Naive thymus-derived CD4-positive, alpha-beta T cell (primary cell): ENCODE measurements at regions of chr17 and their contacts with region 1.

Region 1: DNA sequence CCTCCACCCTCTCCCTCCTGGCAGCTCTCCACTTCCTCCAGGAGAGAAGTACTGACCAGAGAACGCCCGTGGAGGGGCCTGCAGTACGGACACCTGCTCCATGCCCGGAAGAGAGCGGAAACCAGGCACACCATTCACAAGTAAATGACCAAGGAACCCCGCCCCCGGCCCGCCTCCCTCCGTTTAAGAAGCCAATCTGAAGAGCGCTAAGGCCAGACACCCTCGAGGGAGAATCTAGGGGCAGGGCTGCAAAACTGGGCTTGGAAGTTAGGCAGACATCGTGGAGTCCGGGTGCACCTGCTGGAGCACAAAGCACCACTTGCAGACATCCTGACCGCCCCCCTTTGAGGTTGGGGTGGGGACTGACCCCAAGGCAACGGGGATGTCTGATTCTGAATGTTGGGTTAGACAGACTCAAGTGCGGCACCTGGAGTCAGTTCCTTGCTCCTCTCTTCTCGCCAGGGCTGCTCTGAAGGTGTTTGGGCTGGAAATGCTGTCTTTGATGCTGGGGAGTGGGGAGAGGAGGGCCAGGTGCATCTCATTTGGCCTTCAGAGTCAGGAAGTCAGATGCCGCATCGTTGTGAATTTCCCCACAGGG is 964 bp upstream of the FAAP100 start:
- DNase-seq: peak; percentile 34 to 83 (median 75)
- ATAC-seq: peak; percentile 77
- H3K4me3 ChIP-seq: peak overlapping the region; percentile 77
- H3K4me3 Mint-ChIP-seq: peak overlapping the region; percentile 88 to 93 (median 90)
- H3K27ac ChIP-seq: peak overlapping the region; percentile 95
- H3K27ac Mint-ChIP-seq: peak overlapping the region; percentile 69 to 95 (median 92)
- H3K4me1 ChIP-seq: peaks cover 17% of the 10 kb centered on the region in 2 donors
- H3K4me1 Mint-ChIP-seq: peaks cover 16 to 41% (median 36%) of the 10 kb centered on the region in 7 donors
- H3K27me3 ChIP-seq: no peaks in the 10 kb centered on the region
- H3K27me3 Mint-ChIP-seq: no peaks in the 10 kb centered on the region

Region 2: DNA sequence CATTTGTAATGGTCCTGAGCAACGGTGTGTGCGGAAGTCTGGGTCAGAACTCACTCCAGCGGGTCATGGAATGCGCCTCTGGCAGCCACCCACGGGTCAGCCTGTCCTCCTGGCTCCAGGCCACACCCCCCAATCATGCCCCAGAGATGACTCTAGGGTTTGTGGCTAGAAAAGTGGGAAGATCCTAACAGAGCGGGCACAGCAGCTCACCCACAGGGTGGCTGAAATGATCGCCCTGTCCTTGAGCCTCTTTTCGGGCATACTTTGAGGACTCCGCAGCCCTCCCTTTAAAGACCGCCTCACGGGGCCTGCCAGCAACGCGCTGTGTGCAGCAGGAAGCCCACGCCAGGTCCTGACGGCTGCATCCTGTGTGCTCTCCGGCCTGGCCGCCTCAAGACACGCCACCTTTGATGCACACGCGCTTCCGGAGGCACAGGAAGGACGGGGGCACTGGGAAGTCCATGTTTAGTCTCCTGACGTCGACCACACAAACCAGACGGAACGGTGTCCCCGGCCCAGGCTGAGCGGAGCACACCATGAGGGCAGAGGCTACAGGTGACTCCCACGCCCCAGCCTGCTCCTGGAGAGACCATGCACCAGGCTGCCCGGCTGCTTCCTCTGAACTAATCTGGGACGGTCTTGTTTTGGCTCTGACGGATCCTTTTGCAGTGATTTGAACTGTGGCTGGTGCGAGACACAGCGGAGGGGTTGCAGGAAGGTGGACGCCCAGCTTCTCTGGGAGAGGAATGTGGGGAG is 1610.3 kb before region 1 on chr17:
- CTCF ChIA-PET with region 1: no interaction called
- POLR2A ChIA-PET with region 1: no interaction called
- intact Hi-C with region 1: no loop called
- DNase-seq: no peak
- ATAC-seq: peak; percentile 60
- H3K4me3 ChIP-seq: no peak overlapping the region
- H3K4me3 Mint-ChIP-seq: peak overlapping the region in 9 of 10 donors; percentile 17 to 74 (median 43)
- H3K27ac ChIP-seq: no peak overlapping the region
- H3K27ac Mint-ChIP-seq: peak overlapping the region in 3 of 9 donors; percentile 6 to 59 (median 30)
- H3K4me1 ChIP-seq: peaks cover 0 to 10% of the 10 kb centered on the region in 2 donors
- H3K4me1 Mint-ChIP-seq: peaks cover 5 to 11% (median 8%) of the 10 kb centered on the region in 7 donors
- H3K27me3 ChIP-seq: no peaks in the 10 kb centered on the region
- H3K27me3 Mint-ChIP-seq: peaks cover 0 to 4% (median under 1%) of the 10 kb centered on the region in 5 donors

Region 3: GRCh38 chr17:81222906-81223761 is 330.0 kb before region 1 on chr17 and contains the start of gene CEP131:
- CTCF ChIA-PET with region 1: no interaction called
- POLR2A ChIA-PET with region 1: no interaction called
- intact Hi-C with region 1: loop called in 1 of 2 experiments (anchors 1 kb)
- DNase-seq: peak; percentile 96 to 100 (median 98)
- ATAC-seq: peak; percentile 96
- H3K4me3 ChIP-seq: peak within 1 kb of the TSS; percentile 60
- H3K4me3 Mint-ChIP-seq: peak within 1 kb of the TSS; percentile 74 to 89 (median 86)
- H3K27ac ChIP-seq: peak within 1 kb of the TSS; percentile 68
- H3K27ac Mint-ChIP-seq: peak within 1 kb of the TSS; percentile 7 to 84 (median 74)
- H3K4me1 ChIP-seq: peaks cover 11 to 19% of the 10 kb centered on the region in 2 donors
- H3K4me1 Mint-ChIP-seq: peaks cover 13 to 24% (median 20%) of the 10 kb centered on the region in 7 donors
- H3K27me3 ChIP-seq: no peaks in the 10 kb centered on the region
- H3K27me3 Mint-ChIP-seq: peaks cover 0 to 8% (median 0%) of the 10 kb centered on the region in 5 donors
- total RNA-seq, gene CEP131: 8.1 to 13.0 (median 10.0) TPM

Region 4: GRCh38 chr17:81294856-81295680 is 258.0 kb before region 1 on chr17 and contains the start of gene SLC38A10:
- CTCF ChIA-PET with region 1: interaction called, 4 read pairs
- POLR2A ChIA-PET with region 1: interaction called, 4 read pairs
- intact Hi-C with region 1: loop called (anchors 2 kb)
- DNase-seq: peak; percentile 81 to 93 (median 89)
- ATAC-seq: peak; percentile 91
- H3K4me3 ChIP-seq: peak within 1 kb of the TSS; percentile 82
- H3K4me3 Mint-ChIP-seq: peak within 1 kb of the TSS; percentile 92 to 99 (median 97)
- H3K27ac ChIP-seq: peak within 1 kb of the TSS; percentile 94
- H3K27ac Mint-ChIP-seq: peak within 1 kb of the TSS; percentile 92 to 98 (median 96)
- H3K4me1 ChIP-seq: peaks cover 22% of the 10 kb centered on the region in 2 donors
- H3K4me1 Mint-ChIP-seq: peaks cover 18 to 50% (median 36%) of the 10 kb centered on the region in 7 donors
- H3K27me3 ChIP-seq: no peaks in the 10 kb centered on the region
- H3K27me3 Mint-ChIP-seq: no peaks in the 10 kb centered on the region
- total RNA-seq, gene SLC38A10: 54.9 to 122 (median 86.5) TPM

Region 5: GRCh38 chr17:81494626-81495385 is 58.3 kb before region 1 on chr17:
- CTCF ChIA-PET with region 1: no interaction called
- POLR2A ChIA-PET with region 1: no interaction called
- intact Hi-C with region 1: no loop called
- DNase-seq: no peak
- ATAC-seq: no peak
- H3K4me3 ChIP-seq: no peak overlapping the region
- H3K4me3 Mint-ChIP-seq: no peak overlapping the region
- H3K27ac ChIP-seq: no peak overlapping the region
- H3K27ac Mint-ChIP-seq: no peak overlapping the region
- H3K4me1 ChIP-seq: no peaks in the 10 kb centered on the region
- H3K4me1 Mint-ChIP-seq: peaks cover 0 to 4% (median under 1%) of the 10 kb centered on the region in 7 donors
- H3K27me3 ChIP-seq: no peaks in the 10 kb centered on the region
- H3K27me3 Mint-ChIP-seq: peaks cover 0 to 33% (median 0%) of the 10 kb centered on the region in 5 donors

Region 6: GRCh38 chr17:81512560-81513371 is 40.4 kb before region 1 on chr17 and contains the start of gene ACTG1:
- CTCF ChIA-PET with region 1: no interaction called
- POLR2A ChIA-PET with region 1: interaction called, 65 read pairs
- intact Hi-C with region 1: loop called (anchors 1 kb)
- DNase-seq: peak; percentile 87 to 93 (median 92)
- ATAC-seq: peak; percentile 87
- H3K4me3 ChIP-seq: peak within 1 kb of the TSS; percentile 77
- H3K4me3 Mint-ChIP-seq: peak within 1 kb of the TSS; percentile 91 to 100 (median 98)
- H3K27ac ChIP-seq: peak within 1 kb of the TSS; percentile 79
- H3K27ac Mint-ChIP-seq: peak within 1 kb of the TSS; percentile 92 to 99 (median 95)
- H3K4me1 ChIP-seq: peaks cover 12 to 31% of the 10 kb centered on the region in 2 donors
- H3K4me1 Mint-ChIP-seq: peaks cover 23 to 53% (median 47%) of the 10 kb centered on the region in 7 donors
- H3K27me3 ChIP-seq: no peaks in the 10 kb centered on the region
- H3K27me3 Mint-ChIP-seq: peaks cover 0 to 7% (median 0%) of the 10 kb centered on the region in 5 donors
- total RNA-seq, gene ACTG1: 971 to 4,639 (median 1,185) TPM

Region 7: GRCh38 chr17:81601525-81602120 is 48.5 kb after region 1 on chr17:
- CTCF ChIA-PET with region 1: interaction called, 4 read pairs
- POLR2A ChIA-PET with region 1: interaction called, 6 read pairs
- intact Hi-C with region 1: loop called (anchors 1 to 2 kb)
- DNase-seq: peak in 8 of 9 donors; percentile 30 to 69 (median 60)
- ATAC-seq: peak; percentile 92
- H3K4me3 ChIP-seq: no peak overlapping the region
- H3K4me3 Mint-ChIP-seq: no peak overlapping the region
- H3K27ac ChIP-seq: no peak overlapping the region
- H3K27ac Mint-ChIP-seq: peak overlapping the region in 3 of 9 donors; percentile 1 to 48 (median 25)
- H3K4me1 ChIP-seq: peaks cover 0 to 6% of the 10 kb centered on the region in 2 donors
- H3K4me1 Mint-ChIP-seq: peaks cover 2 to 14% (median 9%) of the 10 kb centered on the region in 7 donors
- H3K27me3 ChIP-seq: no peaks in the 10 kb centered on the region
- H3K27me3 Mint-ChIP-seq: no peaks in the 10 kb centered on the region

Region 8: DNA sequence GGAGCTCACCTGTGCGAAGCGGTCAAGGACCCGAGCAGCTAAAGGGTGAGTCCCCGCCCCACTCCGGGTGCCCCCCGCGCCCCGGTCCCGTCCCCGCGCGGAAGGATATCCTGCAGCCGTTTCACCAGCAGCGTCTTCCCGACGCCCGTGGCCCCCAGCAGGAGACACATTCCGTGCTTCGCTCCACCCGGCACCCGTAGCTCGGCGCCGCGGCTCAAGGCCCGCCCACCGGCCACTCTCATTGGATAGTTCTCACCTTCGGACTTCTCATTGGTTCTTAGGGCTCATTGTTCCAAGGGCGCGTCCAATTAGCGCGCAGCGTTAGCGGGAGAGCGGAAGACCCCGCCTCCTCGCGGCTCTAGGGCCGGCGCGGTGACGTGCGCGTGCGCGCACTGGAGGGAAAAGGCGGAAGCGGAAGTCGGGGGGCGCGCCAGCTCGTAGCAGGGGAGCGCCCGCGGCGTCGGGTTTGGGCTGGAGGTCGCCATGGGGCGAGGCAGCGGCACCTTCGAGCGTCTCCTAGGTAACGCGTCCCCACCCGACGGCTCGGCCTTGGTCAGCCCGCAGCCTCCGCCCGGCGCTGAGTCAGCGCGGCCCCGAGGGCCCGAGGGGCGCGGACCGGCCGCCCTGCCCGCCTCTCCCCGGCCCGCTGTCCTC is 130.6 kb after region 1 on chr17 and contains the starts of genes ARL16 and HGS:
- CTCF ChIA-PET with region 1: no interaction called
- POLR2A ChIA-PET with region 1: no interaction called
- intact Hi-C with region 1: loop called in 1 of 2 experiments (anchors 5 kb)
- DNase-seq: peak; percentile 91 to 98 (median 97)
- ATAC-seq: peak; percentile 98
- H3K4me3 ChIP-seq: peak within 1 kb of the TSS; percentile 76
- H3K4me3 Mint-ChIP-seq: peak within 1 kb of the TSS; percentile 88 to 99 (median 96)
- H3K27ac ChIP-seq: peak within 1 kb of the TSS; percentile 84
- H3K27ac Mint-ChIP-seq: peak within 1 kb of the TSS; percentile 83 to 97 (median 95)
- H3K4me1 ChIP-seq: peaks cover 22 to 24% of the 10 kb centered on the region in 2 donors
- H3K4me1 Mint-ChIP-seq: peaks cover 22 to 49% (median 40%) of the 10 kb centered on the region in 7 donors
- H3K27me3 ChIP-seq: no peaks in the 10 kb centered on the region
- H3K27me3 Mint-ChIP-seq: peaks cover 0 to 3% (median 0%) of the 10 kb centered on the region in 5 donors
- total RNA-seq, gene ARL16: 12.0 to 30.6 (median 30.1) TPM
- total RNA-seq, gene HGS: 108 to 174 (median 153) TPM

Region 9: DNA sequence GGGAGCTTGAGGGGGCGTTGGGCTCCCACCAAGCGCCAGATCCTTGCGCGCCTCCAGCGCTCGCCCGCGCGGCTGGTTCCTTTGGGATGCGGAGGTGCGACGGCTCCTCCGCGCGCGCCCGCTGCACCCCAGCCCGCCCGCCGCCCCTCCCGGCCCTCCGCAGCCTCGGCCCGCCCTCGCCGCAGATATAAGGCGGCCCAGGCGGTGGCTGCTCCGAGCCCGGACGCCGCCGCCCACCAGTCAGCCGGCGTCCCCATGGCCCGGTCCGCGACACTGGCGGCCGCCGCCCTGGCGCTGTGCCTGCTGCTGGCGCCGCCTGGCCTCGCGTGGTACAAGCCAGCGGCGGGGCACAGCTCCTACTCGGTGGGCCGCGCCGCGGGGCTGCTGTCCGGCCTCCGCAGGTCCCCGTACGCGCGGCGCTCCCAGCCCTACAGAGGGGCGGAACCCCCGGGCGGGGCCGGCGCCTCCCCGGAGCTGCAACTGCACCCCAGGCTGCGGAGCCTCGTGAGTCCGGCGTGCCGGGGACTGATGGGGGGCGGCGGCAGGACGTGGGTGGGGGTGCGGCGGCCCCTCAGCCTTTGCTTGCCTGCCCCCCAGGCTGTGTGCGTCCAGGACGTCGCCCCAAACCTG is 349.0 kb after region 1 on chr17 and contains the start of gene NPB:
- CTCF ChIA-PET with region 1: no interaction called
- POLR2A ChIA-PET with region 1: no interaction called
- intact Hi-C with region 1: no loop called
- DNase-seq: no peak
- ATAC-seq: peak; percentile 34
- H3K4me3 ChIP-seq: no peak within 1 kb of the TSS
- H3K4me3 Mint-ChIP-seq: peak within 1 kb of the TSS in 8 of 10 donors; percentile 3 to 70 (median 34)
- H3K27ac ChIP-seq: no peak within 1 kb of the TSS
- H3K27ac Mint-ChIP-seq: no peak within 1 kb of the TSS
- H3K4me1 ChIP-seq: no peaks in the 10 kb centered on the region
- H3K4me1 Mint-ChIP-seq: peaks cover 0 to 10% (median 8%) of the 10 kb centered on the region in 7 donors
- H3K27me3 ChIP-seq: peaks cover 0 to 4% of the 10 kb centered on the region in 2 donors
- H3K27me3 Mint-ChIP-seq: peaks cover 8 to 18% (median 8%) of the 10 kb centered on the region in 5 donors
- total RNA-seq, gene NPB: 0.29 to 0.59 (median 0.54) TPM in 4 of 5 experiments, not detected in the other

Region 10: GRCh38 chr17:82765371-82765770 is 1212.3 kb after region 1 on chr17:
- CTCF ChIA-PET with region 1: no interaction called
- POLR2A ChIA-PET with region 1: no interaction called
- intact Hi-C with region 1: no loop called
- DNase-seq: no peak
- ATAC-seq: no peak
- H3K4me3 ChIP-seq: no peak overlapping the region
- H3K4me3 Mint-ChIP-seq: no peak overlapping the region
- H3K27ac ChIP-seq: no peak overlapping the region
- H3K27ac Mint-ChIP-seq: peak overlapping the region in 2 of 9 donors; percentile 42 to 63
- H3K4me1 ChIP-seq: no peaks in the 10 kb centered on the region
- H3K4me1 Mint-ChIP-seq: peaks cover 7 to 21% (median 14%) of the 10 kb centered on the region in 7 donors
- H3K27me3 ChIP-seq: no peaks in the 10 kb centered on the region
- H3K27me3 Mint-ChIP-seq: no peaks in the 10 kb centered on the region